ENCODE measurements at regions of chr14 and their contacts with region 1.

Region 1: DNA sequence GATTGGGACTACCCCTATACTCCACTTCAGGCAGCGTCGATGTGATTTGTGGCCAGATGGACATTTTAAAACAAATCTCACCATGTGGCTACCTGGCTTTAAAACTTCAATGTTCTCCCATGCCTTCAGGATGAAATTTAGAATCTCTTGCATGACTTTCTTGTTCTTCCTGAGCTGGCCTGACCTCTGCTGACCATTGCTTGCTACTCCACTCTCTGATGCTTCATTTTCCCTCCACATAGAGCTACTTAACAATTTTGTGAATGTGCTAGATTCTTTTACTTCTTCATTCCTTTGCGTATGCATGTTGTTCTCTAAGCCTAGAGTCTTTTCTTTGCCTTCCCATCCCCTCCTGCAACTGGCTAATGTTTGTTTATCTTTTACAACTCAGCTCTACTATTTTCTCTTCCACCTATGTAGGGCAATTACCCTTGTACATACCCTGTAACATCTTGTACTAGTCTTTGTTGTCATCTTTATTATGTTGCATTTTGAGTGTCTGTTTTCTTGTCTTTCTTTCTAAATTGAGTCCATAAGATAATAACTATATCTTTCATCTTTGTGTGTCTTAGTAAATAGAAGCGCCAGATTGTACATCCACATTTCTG is 41.2 kb downstream of the YLPM1 start:
- DNase-seq: peak; percentile 33
- ATAC-seq: peak; percentile 87
- H3K4me3 ChIP-seq: no peak overlapping the region
- H3K27ac ChIP-seq: no peak overlapping the region
- H3K4me1 ChIP-seq: no peaks in the 10 kb centered on the region
- H3K27me3 ChIP-seq: no peaks in the 10 kb centered on the region
- CTCF ChIP-seq: peak; percentile 55 to 73 (median 70); a peak in 5 of 6 replicates
- POLR2A ChIP-seq: no peak
- RAD21 ChIP-seq: peak; percentile 75

Region 2: DNA sequence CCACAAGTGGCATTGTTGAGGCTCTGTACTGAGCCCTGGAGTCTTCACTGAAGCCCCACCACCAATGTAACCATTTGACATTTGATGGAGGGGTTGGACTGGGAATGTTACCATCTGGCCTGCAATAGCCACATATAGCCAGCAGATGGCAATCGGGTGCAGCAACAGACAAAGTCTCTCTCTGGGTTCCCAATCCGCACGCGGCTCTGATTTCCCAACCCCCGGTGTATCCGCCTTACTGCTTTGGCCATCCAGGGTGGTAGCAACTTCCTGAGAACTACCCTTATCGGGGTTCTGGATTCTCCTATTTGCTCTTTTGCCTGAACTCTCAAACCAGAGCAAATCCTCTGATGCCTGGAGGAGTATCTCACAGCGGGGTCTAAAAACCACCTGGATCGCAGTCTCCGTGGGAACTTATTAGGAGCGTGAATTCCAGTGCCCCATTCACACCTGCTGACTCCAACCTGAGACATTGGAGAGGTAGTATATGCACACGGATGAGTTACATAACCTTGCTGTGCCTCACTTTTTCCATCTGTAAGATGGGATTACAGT is 441.9 kb before region 1 on chr14:
- CTCF ChIA-PET with region 1: no interaction called
- POLR2A ChIA-PET with region 1: no interaction called
- RAD21 ChIA-PET with region 1: no interaction called
- intact Hi-C with region 1: loop called (anchors 5 kb)
- DNase-seq: peak; percentile 41
- ATAC-seq: peak; percentile 93
- H3K4me3 ChIP-seq: no peak overlapping the region
- H3K27ac ChIP-seq: no peak overlapping the region
- H3K4me1 ChIP-seq: peaks cover 2 to 5% of the 10 kb centered on the region in 2 experiments; a peak in 3 of 4 replicates
- H3K27me3 ChIP-seq: no peaks in the 10 kb centered on the region
- CTCF ChIP-seq: peak; percentile 81 to 96 (median 96)
- POLR2A ChIP-seq: no peak
- RAD21 ChIP-seq: peak; percentile 90

Region 3: DNA sequence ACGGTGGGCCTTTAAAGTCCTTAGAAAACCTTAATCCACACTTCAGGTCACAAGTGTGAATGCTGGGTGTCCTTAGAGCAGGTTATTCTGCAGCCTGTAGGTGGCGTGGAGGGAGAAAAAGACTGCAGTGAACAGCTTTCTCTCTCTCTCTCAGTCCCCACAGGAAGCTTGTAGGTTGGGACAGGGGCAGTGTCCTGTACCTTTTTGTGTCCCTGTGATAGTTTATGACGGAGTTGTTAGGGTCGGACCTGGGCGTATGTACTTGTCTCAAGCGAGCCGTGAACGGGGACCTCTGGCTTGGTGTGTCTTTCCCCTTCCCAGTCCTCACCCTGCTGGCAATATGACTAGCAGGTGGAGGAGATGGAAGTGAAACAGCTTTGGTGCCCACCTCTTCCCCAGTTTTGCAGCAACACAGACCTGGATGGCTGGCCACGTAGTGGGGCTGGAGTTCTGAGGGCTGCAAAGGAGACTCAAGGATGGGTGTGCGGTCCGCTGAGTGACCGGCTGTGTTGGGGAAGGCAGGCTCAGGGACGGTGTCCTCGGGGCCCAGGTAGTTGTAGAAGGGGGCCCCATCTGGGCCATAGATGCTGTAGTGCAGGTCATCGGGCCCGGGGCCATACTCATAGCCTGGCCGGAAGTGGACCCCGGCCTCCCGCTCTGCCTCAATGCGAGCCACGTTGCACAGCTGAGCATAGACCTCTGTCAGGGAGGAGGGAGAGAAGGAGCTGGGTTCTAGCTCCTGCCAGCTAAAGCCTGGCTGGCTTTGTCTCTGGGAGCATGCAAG is 301.9 kb before region 1 on chr14:
- CTCF ChIA-PET with region 1: no interaction called
- POLR2A ChIA-PET with region 1: no interaction called
- RAD21 ChIA-PET with region 1: no interaction called
- intact Hi-C with region 1: loop called (anchors 1 kb)
- DNase-seq: no peak
- ATAC-seq: peak; percentile 80
- H3K4me3 ChIP-seq: no peak overlapping the region
- H3K27ac ChIP-seq: no peak overlapping the region
- H3K4me1 ChIP-seq: peaks cover 0 to 15% of the 10 kb centered on the region in 2 experiments; a peak in 2 of 4 replicates
- H3K27me3 ChIP-seq: no peaks in the 10 kb centered on the region
- CTCF ChIP-seq: peak; percentile 40 to 71 (median 62); a peak in 5 of 6 replicates
- POLR2A ChIP-seq: no peak
- RAD21 ChIP-seq: peak; percentile 36

Region 4: DNA sequence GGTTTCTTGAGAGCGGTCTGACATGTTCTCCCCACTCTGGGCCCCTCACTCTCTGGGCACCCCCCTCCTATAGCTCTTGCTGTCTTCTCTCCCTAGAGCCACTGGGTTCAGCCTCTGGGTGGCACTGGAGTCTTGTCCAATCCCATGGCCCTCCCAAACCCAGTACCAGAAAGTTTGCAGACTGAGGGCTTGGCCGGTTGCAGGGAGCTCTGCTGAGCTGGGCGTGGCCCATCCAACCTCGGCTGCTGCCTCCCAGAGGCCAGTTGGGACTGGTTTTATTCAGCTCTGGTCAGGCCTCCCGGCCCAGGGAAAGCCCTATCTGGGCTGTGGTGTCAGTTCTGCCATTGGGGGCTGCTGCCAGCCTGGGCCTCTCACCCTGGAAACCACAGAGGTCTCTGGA is 272.9 kb before region 1 on chr14:
- CTCF ChIA-PET with region 1: interaction called, 4 read pairs
- POLR2A ChIA-PET with region 1: no interaction called
- RAD21 ChIA-PET with region 1: no interaction called
- intact Hi-C with region 1: loop called (anchors 1 kb)
- DNase-seq: peak; percentile 63
- ATAC-seq: peak; percentile 98
- H3K4me3 ChIP-seq: no peak overlapping the region
- H3K27ac ChIP-seq: no peak overlapping the region; the same call in 1 of the 2 replicates
- H3K4me1 ChIP-seq: peaks cover 10 to 20% of the 10 kb centered on the region in 2 experiments
- H3K27me3 ChIP-seq: no peaks in the 10 kb centered on the region
- CTCF ChIP-seq: peak; percentile 41 to 73 (median 44); a peak in 5 of 6 replicates
- POLR2A ChIP-seq: no peak
- RAD21 ChIP-seq: peak; percentile 82

Region 5: GRCh38 chr14:74608959-74609611 is 195.2 kb before region 1 on chr14:
- CTCF ChIA-PET with region 1: interaction called, 111 read pairs
- POLR2A ChIA-PET with region 1: no interaction called
- RAD21 ChIA-PET with region 1: interaction called, 16 read pairs
- intact Hi-C with region 1: loop called (anchors 1 kb)
- DNase-seq: peak; percentile 79
- ATAC-seq: peak; percentile 70
- H3K4me3 ChIP-seq: no peak overlapping the region
- H3K27ac ChIP-seq: no peak overlapping the region
- H3K4me1 ChIP-seq: peaks cover 0 to 15% of the 10 kb centered on the region in 2 experiments; a peak in 1 of 4 replicates
- H3K27me3 ChIP-seq: no peaks in the 10 kb centered on the region
- CTCF ChIP-seq: peak in 2 of 3 experiments; percentile 98; a peak in 4 of 6 replicates
- POLR2A ChIP-seq: no peak
- RAD21 ChIP-seq: no peak

Region 6: GRCh38 chr14:74792249-74793039 is 11.9 kb before region 1 on chr14:
- CTCF ChIA-PET with region 1: interaction called, 11 read pairs
- POLR2A ChIA-PET with region 1: no interaction called
- RAD21 ChIA-PET with region 1: no interaction called
- intact Hi-C with region 1: no loop called
- DNase-seq: no peak
- ATAC-seq: no peak
- H3K4me3 ChIP-seq: no peak overlapping the region
- H3K27ac ChIP-seq: no peak overlapping the region
- H3K4me1 ChIP-seq: no peaks in the 10 kb centered on the region
- H3K27me3 ChIP-seq: no peaks in the 10 kb centered on the region
- CTCF ChIP-seq: no peak
- POLR2A ChIP-seq: no peak
- RAD21 ChIP-seq: no peak